ENCODE measurements at regions of chr12 and their contacts with region 1.

Region 1: DNA sequence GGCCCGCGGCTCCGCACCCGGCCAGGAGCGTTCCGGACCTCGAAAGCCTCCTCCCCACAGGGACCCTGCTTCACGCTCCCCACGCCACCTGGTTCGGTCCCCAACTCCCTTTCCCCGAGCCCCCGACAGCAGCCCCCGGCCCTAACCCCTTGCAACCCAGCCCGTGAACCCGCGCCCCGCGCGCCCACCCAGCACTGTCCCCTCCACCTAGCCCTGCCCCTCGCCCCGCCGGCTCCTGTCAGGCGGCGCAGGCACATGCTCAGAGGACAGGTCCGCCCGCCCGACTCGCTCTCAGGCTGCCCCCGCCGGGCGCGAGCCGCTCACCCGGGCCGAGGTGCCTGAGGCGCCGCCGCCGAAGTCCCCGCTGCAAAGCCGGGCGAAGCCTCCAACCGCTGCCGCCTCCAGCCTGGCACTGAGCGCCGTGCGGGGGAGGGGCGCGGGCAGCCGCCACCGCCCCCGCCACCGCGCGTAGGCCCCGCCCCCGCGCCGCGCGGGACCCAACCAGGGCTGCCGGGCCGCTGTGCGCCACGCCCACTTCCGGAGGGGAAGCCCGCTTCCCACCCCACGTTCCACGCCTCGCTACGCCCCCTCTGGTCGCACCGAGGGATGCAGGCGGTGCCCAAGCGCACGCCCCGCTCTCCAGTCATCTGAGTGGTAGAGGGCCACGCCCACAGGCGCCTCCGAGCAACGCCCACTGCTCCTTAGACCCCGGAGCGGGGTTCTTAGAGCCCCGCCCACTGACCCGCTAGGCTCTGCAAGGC is at the start of gene CORO1C:
- DNase-seq: peak; percentile 94 to 98 (median 97)
- H3K4me3 ChIP-seq: peak within 1 kb of the TSS; percentile 64 to 94 (median 85)
- H3K27ac ChIP-seq: peak within 1 kb of the TSS; percentile 66 to 85
- H3K4me1 ChIP-seq: peaks cover 20 to 45% (median 32%) of the 10 kb centered on the region in 4 experiments
- H3K27me3 ChIP-seq: no peaks in the 10 kb centered on the region

Region 2: GRCh38 chr12:108691175-108691997 is 39.9 kb before region 1 on chr12:
- CTCF ChIA-PET with region 1: interaction called, 11 read pairs
- POLR2A ChIA-PET with region 1: interaction called, 5 read pairs
- DNase-seq: peak; percentile 95 to 98 (median 98)
- H3K4me3 ChIP-seq: peak overlapping the region in 6 of 7 experiments; percentile 24 to 67 (median 56)
- H3K27ac ChIP-seq: peak overlapping the region; percentile 69 to 85
- H3K4me1 ChIP-seq: peaks cover 39 to 89% (median 76%) of the 10 kb centered on the region in 4 experiments
- H3K27me3 ChIP-seq: no peaks in the 10 kb centered on the region